RWPE1 (cell line): ENCODE measurements at regions of chr14 and their contacts with region 1.

Region 1: GRCh38 chr14:76911473-76911872 is 85.3 kb downstream of the LRRC74A start:
- DNase-seq: no peak
- H3K27ac ChIP-seq: no peak overlapping the region
- CTCF ChIP-seq: no peak

Region 2: DNA sequence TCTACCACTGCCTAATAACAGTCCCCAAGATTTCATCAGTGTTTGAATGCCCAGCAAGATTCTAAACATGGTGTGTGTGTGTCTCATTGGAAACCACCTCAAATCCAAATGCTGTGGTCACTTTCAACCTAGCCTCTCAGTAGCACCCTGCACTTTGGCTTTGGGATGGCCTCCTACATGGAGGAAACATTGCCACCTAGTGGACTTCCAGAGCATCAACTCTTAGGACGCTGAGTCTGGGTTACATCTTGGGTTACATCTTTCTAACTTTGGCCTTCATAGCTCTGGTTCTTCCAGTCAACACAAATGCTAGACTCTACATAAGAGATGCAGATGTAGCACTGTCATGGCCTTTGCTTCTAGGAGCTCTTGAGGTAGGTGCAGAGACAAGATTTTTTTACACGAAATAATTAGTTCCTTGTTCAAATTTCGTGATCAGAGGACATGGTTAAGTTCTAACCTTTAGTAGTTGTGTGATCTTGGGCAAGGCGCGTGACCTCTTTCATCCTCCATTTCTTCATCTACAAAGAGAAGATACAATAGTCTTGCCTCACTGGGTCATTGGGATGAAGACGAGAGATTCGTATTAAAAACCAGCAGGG is 263.7 kb before region 1 on chr14:
- CTCF ChIA-PET with region 1: no interaction called
- POLR2A ChIA-PET with region 1: no interaction called
- DNase-seq: peak; percentile 73
- H3K27ac ChIP-seq: no peak overlapping the region
- CTCF ChIP-seq: peak; percentile 85

Region 3: DNA sequence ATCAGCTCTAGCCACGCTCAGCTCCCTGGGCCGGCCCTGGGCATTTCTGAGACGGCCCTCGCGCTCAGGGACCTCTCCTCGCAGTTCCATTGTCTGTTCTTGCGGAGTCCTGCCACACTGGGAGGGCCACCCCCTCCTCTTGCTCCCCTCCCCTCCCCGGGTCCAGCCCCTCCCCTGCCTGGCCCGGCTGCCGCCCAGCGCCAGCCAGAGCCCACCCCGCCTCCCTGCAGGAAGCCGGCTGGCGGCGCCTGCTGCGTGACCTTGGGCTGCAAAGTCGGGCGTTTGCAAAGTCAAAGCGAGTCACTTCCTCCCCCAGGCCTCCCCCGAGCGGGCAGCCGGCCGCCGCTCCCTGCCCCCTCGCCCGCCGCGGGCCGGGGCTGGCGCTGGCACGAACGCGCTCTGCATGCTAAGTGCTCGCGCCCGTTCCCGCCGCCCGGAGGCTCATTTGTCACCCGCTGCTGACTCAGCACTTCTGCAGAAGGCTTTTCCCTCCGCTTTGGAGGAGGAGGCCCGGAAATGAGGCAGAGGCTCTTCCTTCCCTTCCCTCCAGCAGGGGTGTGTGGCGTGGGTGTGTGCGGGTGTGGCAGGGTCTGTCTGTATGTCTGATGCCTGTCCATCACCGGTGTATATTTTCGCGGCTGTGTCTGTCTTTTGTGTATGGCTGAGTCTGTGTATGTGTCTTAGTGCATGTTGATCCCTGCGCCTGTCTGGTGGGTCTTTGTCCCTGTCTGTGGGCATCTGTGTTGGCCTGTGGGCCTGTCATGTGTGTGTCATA is 45.0 kb after region 1 on chr14:
- CTCF ChIA-PET with region 1: interaction called, 19 read pairs
- POLR2A ChIA-PET with region 1: interaction called, 3 read pairs
- DNase-seq: peak; percentile 82
- H3K27ac ChIP-seq: peak overlapping the region; percentile 100
- CTCF ChIP-seq: no peak

Region 4: DNA sequence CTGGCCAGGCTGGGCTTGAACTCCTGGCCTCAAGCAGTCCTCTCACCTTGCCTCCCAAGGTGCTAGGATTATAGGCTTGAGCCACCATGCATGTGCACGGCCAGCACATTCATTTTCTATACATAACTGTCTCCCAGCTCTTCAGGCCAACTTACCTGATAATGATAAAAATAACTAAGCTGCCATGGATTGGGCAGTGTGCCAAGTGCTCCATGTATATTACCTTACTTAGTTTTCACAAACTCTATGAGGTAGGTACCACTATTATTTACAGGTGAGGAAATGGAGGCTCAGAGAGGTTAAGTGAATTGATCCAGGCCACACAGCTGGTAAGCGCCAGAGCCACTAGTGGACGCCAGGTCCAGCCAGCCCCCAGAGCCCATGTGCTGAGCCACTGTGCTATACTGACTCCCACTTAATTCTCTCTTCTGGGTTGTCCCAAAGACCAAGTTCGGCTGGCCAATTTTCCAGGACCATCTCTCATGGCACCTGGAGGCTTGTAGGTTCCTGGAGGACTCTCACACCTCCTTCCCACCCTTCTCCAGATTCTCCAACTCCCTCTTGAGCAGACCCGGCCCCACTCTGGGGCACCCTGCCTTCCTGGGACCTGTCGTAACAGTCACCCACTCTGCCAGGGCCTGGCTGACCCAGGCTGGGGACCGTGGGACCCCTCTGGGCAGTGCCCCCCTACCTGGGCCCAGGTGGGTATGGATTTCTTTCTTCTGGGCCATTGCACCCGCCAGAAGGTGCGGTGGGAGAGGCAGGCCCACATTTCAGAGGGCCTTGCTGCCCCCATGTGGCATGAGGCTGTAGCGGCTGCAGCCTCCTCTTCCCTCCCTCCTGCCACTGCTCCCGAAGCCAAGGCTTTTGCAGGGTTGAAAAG is 156.4 kb after region 1 on chr14:
- CTCF ChIA-PET with region 1: interaction called, 38 read pairs
- POLR2A ChIA-PET with region 1: no interaction called
- DNase-seq: peak; percentile 80
- H3K27ac ChIP-seq: peak overlapping the region; percentile 57
- CTCF ChIP-seq: peak; percentile 91